H1 (cell line): ENCODE measurements at regions of chr1 and their contacts with region 1.

Region 1: DNA sequence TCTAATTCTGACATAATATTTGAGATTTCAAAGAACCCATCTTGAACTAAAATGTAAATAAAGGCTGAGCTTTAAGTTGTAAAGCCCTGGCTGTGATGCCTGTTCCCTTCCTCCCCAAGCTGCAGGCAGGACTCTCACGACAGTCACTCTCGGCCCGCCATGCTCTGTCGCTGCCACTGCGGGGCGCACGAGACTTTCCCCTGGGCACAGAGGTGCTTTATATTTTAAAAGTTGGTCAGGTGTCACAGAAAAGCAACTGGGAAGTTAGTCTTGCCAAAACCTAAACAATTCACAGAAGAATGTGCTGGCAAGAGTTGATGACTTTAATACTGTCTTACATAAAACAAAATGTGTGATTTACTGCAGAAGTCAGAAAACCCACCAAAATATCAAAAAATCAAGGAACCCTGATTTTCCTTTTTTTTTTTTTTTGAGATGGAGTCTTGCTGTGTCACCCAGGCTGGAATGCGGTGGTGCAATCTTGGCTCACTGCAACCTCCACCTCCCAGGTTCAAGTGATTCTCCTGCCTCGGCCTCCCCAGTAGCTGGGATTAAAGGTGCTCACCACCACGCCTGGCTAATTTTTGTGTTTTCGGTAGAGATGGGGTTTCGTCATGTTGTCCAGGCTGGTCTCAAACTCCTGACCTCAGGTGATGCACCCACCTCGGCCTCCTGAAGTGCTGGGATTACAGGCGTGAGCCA is 10.7 kb downstream of the LRRC47 start:
- DNase-seq: peak in 1 of 2 experiments; percentile 84
- H3K4me3 ChIP-seq: no peak overlapping the region
- H3K27ac ChIP-seq: no peak overlapping the region
- H3K4me1 ChIP-seq: peaks cover 0 to 13% (median 10%) of the 10 kb centered on the region in 4 experiments; a peak in 5 of 7 replicates
- H3K27me3 ChIP-seq: no peaks in the 10 kb centered on the region
- CTCF ChIP-seq: peak; percentile 76 to 88 (median 87)
- EP300 ChIP-seq: no peak
- POLR2A ChIP-seq: no peak
- RAD21 ChIP-seq: peak; percentile 87 to 90

Region 2: GRCh38 chr1:3598051-3598491 is 187.5 kb before region 1 on chr1:
- CTCF ChIA-PET with region 1: no interaction called
- POLR2A ChIA-PET with region 1: no interaction called
- DNase-seq: no peak
- H3K4me3 ChIP-seq: no peak overlapping the region
- H3K27ac ChIP-seq: no peak overlapping the region
- H3K4me1 ChIP-seq: peaks cover 0 to 28% (median 20%) of the 10 kb centered on the region in 4 experiments; a peak in 6 of 7 replicates
- H3K27me3 ChIP-seq: no peaks in the 10 kb centered on the region
- CTCF ChIP-seq: no peak
- EP300 ChIP-seq: no peak
- POLR2A ChIP-seq: no peak
- RAD21 ChIP-seq: no peak

Region 3: GRCh38 chr1:3750741-3751140 is 34.9 kb before region 1 on chr1:
- CTCF ChIA-PET with region 1: no interaction called
- POLR2A ChIA-PET with region 1: no interaction called
- DNase-seq: no peak
- H3K4me3 ChIP-seq: no peak overlapping the region
- H3K27ac ChIP-seq: no peak overlapping the region
- H3K4me1 ChIP-seq: peaks cover 0 to 8% (median 6%) of the 10 kb centered on the region in 4 experiments; a peak in 5 of 7 replicates
- H3K27me3 ChIP-seq: peaks cover 0 to 3% (median 0%) of the 10 kb centered on the region in 4 experiments; a peak in 5 of 7 replicates
- CTCF ChIP-seq: no peak
- EP300 ChIP-seq: no peak
- POLR2A ChIP-seq: no peak
- RAD21 ChIP-seq: no peak

Region 4: DNA sequence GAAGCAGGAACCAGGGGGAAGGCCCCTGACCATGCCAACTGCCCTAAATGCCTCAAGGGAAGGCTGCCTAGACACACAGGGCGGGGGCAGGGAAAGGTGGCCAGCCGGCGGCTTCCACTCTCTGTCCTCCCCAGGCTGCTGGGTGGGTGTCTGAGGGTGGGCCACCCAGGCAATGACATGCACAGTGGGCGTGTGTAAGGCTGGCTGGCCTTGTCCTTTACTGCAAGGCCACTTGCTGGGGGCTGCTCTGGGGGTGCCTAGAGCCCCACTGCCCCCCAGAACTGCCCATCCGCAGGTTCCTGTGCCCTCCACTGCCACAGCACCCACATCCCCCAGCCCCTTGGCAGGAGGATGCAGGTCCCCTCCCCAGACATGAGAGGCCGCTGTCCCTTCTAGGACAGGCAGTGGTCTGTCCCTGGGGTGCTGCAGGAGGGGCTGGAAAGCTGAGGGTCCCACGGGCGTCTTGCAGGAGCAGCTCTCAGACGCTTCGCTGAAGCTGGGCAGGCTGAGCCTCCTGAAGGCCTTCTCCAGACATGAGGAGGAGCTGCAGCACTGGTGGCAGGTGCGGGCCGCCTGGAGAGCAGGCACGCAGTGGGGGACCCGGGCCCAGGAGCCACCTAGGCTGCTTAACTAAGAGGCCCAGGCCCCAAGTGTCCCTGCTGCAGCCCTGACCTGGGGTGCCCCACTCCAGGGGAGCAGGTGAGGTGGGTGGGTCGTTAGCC is 23.3 kb before region 1 on chr1:
- CTCF ChIA-PET with region 1: interaction called, 15 read pairs
- POLR2A ChIA-PET with region 1: no interaction called
- DNase-seq: no peak
- H3K4me3 ChIP-seq: no peak overlapping the region
- H3K27ac ChIP-seq: no peak overlapping the region
- H3K4me1 ChIP-seq: no peaks in the 10 kb centered on the region
- H3K27me3 ChIP-seq: peaks cover 0 to 2% (median 0%) of the 10 kb centered on the region in 4 experiments; a peak in 2 of 7 replicates
- CTCF ChIP-seq: no peak
- EP300 ChIP-seq: no peak
- POLR2A ChIP-seq: no peak
- RAD21 ChIP-seq: no peak

Region 5: GRCh38 chr1:3772027-3772714 is 13.4 kb before region 1 on chr1:
- CTCF ChIA-PET with region 1: interaction called, 24 read pairs
- POLR2A ChIA-PET with region 1: interaction called, 84 read pairs
- DNase-seq: peak; percentile 77 to 94
- H3K4me3 ChIP-seq: peak overlapping the region; percentile 52 to 81 (median 56)
- H3K27ac ChIP-seq: no peak overlapping the region
- H3K4me1 ChIP-seq: peaks cover 0 to 35% (median 13%) of the 10 kb centered on the region in 4 experiments; a peak in 6 of 7 replicates
- H3K27me3 ChIP-seq: no peaks in the 10 kb centered on the region; a peak in 1 of 7 replicates
- CTCF ChIP-seq: no peak
- EP300 ChIP-seq: no peak
- POLR2A ChIP-seq: peak in 1 of 2 experiments; percentile 44; a peak in 1 of 3 replicates
- RAD21 ChIP-seq: no peak